Transverse colon (tissue), 4 donors: ENCODE measurements at regions of chr16 and their contacts with region 1.

Region 1: GRCh38 chr16:78122774-78123315 is 23.4 kb downstream of the WWOX start:
- DNase-seq: no peak
- H3K4me3 ChIP-seq: no peak overlapping the region
- H3K27ac ChIP-seq: peak overlapping the region in 1 of 4 donors; percentile 59
- H3K4me1 ChIP-seq: peaks cover 0 to 23% (median 0%) of the 10 kb centered on the region in 4 donors
- H3K27me3 ChIP-seq: no peaks in the 10 kb centered on the region
- CTCF ChIP-seq: peak; percentile 44 to 67 (median 49)
- EP300 ChIP-seq: no peak
- POLR2A ChIP-seq: no peak

Region 2: DNA sequence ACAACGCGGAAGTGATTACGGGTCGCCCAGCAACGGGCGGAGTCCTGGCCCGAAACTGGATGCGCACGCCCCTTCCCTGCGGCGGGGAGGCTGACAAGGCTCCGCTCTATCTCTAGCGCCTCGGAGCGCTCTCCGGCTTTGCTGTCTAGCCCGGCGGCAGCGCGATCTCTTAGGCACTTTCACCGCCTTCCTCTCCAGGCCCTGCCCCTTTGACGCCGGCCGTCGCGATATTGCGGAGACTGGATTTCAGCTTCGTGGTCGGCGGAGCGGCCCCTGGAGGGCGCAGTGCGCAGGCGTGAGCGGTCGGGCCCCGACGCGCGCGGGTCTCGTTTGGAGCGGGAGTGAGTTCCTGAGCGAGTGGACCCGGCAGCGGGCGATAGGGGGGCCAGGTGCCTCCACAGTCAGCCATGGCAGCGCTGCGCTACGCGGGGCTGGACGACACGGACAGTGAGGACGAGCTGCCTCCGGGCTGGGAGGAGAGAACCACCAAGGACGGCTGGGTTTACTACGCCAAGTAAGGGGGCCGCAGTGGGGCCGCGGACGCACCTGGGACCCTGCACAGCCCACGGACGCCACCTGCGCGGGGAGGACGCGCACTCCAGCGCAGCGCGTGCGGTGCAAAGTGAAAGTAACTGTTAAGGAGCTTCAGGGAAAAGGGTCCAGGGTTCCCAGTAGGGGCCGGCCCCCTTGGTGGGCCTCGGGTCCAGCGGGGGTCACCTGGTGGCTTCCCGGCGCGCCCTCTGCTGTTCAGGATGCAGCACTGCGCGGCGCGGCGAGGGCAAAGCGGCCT is 23.3 kb before region 1 on chr16 and contains the start of gene WWOX:
- in situ Hi-C with region 1: no loop called
- intact Hi-C with region 1: no loop called
- DNase-seq: peak; percentile 98
- H3K4me3 ChIP-seq: peak within 1 kb of the TSS; percentile 62 to 91 (median 84)
- H3K27ac ChIP-seq: peak within 1 kb of the TSS; percentile 92 to 96 (median 94)
- H3K4me1 ChIP-seq: peaks cover 0 to 13% (median 5%) of the 10 kb centered on the region in 4 donors
- H3K27me3 ChIP-seq: peaks cover 3% of the 10 kb centered on the region
- CTCF ChIP-seq: peak; percentile 84 to 96 (median 91)
- EP300 ChIP-seq: no peak
- POLR2A ChIP-seq: peak; percentile 46
- total RNA-seq, gene WWOX: 11.2 to 53.8 (median 24.8) TPM

Region 3: GRCh38 chr16:78184238-78185183 is 61.7 kb after region 1 on chr16:
- in situ Hi-C with region 1: no loop called
- intact Hi-C with region 1: no loop called
- DNase-seq: no peak
- H3K4me3 ChIP-seq: no peak overlapping the region
- H3K27ac ChIP-seq: peak overlapping the region in 3 of 4 donors; percentile 2 to 24 (median 9)
- H3K4me1 ChIP-seq: peaks cover 0 to 16% (median 8%) of the 10 kb centered on the region in 4 donors
- H3K27me3 ChIP-seq: peaks cover 3% of the 10 kb centered on the region
- CTCF ChIP-seq: no peak
- EP300 ChIP-seq: no peak
- POLR2A ChIP-seq: no peak

Region 4: DNA sequence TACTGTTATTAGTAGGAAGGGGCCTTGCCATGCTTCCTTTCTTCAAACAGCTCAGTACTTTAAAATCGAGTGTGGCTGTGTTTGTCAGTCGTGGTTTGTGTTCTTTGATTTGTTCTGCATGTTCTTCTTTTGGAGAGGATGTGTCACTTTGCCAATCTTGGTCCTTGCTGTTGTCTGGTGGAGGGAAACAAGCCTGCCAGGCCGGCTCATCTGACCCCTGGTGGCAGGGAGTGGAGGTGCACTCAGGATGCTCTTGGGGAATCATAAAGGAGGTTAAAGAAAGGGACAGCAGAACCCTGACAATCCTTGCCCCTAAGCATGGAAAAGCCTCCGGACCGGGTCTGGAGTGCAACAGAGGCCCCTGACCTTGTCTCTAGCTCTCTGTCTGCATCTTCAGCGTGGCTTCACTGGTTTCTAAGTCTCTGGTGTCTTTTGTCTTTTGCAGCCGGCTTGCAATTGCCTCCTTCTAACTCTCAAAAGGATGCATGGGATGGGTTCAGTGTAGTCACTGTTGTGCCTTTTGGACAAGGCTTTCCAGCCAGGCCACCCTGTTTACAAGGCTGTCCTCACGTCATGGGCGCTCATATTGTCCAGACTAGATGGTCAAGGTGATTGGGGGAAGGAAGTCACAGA is 112.4 kb after region 1 on chr16:
- in situ Hi-C with region 1: loop called (anchors 5 to 10 kb)
- intact Hi-C with region 1: loop called (anchors 10 kb)
- DNase-seq: peak; percentile 74
- H3K4me3 ChIP-seq: no peak overlapping the region
- H3K27ac ChIP-seq: no peak overlapping the region
- H3K4me1 ChIP-seq: peaks cover 0 to 15% (median 12%) of the 10 kb centered on the region in 4 donors
- H3K27me3 ChIP-seq: no peaks in the 10 kb centered on the region
- CTCF ChIP-seq: peak; percentile 84 to 95 (median 88)
- EP300 ChIP-seq: no peak
- POLR2A ChIP-seq: no peak